ENCODE measurements at regions of chr12 and their contacts with region 1.

Region 1: GRCh38 chr12:118023301-118023860 is 6.9 kb downstream of the RFC5 start:
- DNase-seq: no peak
- ATAC-seq: no peak
- H3K4me3 ChIP-seq: no peak overlapping the region
- H3K27ac ChIP-seq: no peak overlapping the region
- H3K4me1 ChIP-seq: no peaks in the 10 kb centered on the region
- H3K27me3 ChIP-seq: no peaks in the 10 kb centered on the region
- CTCF ChIP-seq: no peak
- POLR2A ChIP-seq: no peak

Region 2: DNA sequence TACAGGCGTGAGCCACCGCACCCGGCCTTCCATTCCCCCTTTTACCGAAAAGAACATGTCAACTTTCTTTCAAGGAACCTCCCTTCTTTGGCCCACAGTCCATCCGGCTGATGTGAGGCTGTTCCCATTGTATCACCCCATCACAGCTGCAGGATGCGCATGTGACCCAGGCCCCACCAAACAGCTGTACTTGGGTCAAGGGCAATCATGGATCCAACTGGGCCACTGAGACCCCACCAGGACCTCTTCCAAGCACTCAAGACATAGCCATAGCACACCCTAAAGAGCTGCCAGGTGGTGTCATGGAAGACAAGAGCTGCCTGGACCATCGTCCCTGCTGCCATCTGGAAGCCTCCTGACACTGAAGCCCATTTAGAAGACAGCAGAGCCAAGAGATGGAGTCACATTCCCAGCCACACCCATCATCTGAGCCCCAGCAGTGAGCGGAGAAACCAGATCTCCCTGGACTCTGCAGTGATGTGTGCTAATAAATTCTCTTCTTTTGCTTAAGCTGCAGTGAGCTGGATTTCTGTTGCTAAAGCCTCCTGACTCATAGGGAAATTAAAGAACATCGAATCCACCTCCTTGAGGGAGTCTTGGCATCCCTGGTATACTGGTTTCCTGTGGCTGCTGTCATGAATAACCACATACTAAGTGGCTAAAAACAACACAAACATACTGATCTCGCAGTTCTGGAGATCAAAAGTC is 160.2 kb before region 1 on chr12:
- intact Hi-C with region 1: loop called in 1 of 2 experiments (anchors 10 kb)
- DNase-seq: no peak
- ATAC-seq: no peak
- H3K4me3 ChIP-seq: no peak overlapping the region
- H3K27ac ChIP-seq: no peak overlapping the region
- H3K4me1 ChIP-seq: no peaks in the 10 kb centered on the region
- H3K27me3 ChIP-seq: no peaks in the 10 kb centered on the region
- CTCF ChIP-seq: no peak
- POLR2A ChIP-seq: no peak